Posterior vena cava (tissue), 2 donors: ENCODE measurements at regions of chr11 and their contacts with region 1.

Region 1: GRCh38 chr11:77127232-77127911 is 674 bp upstream of the MYO7A start:
- DNase-seq: peak; percentile 87

Region 2: DNA sequence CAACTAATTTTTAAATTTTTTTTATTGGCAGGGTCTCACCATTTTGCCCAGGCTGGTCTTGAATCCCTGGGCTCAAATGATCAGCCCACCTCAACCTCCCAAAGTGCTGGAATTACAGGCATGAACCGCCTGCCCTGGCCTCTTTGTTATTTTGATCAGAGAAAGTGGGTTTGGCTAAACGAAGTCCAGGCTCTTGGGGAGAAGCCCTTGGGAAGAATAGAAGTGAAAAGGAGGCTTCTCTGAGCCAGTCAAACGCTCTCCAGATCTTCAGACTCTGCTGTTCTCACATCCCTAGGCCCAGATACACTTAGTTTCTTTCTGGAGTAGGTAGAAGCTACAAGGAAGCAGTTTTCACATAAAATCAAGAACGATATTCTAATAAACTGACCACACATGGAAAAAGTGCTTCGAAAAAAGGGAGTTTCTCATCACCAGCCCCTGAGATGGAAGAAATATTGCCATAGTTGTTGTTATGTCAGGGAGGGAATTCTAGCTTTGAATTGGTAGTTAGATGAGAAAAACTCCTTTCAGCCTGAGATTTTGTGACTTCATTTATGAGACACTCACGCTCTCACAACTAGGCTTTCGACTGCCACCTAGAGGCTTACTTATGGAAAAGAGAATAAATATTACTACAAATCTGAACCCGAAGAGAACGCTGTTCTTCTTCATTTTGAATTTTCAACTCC is 420.6 kb after region 1 on chr11:
- intact Hi-C with region 1: loop called (anchors 10 kb)
- DNase-seq: no peak

Region 3: DNA sequence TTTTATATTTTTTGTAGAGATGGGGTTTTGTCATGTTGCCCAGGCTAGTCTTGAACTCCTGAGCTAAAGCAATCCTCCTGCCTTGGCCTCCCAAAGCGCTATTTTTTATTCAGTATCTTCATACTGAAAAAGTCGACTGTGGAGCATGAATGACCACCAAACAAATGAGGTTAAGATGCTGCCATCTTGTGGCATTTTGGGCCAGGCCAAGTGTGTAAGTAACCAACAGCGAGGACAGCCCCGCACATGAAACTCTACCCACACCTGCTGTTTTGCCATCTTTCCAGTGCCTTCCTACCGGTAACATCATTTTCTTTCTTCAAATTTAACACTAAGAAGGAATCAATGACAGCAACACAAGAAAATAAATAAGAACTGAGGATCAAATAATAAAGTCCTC is 430.2 kb after region 1 on chr11:
- intact Hi-C with region 1: loop called in 1 of 2 experiments (anchors 10 kb)
- DNase-seq: no peak